Left colon (tissue), 2 donors: ENCODE measurements at regions of chr22 and their contacts with region 1.

Region 1: DNA sequence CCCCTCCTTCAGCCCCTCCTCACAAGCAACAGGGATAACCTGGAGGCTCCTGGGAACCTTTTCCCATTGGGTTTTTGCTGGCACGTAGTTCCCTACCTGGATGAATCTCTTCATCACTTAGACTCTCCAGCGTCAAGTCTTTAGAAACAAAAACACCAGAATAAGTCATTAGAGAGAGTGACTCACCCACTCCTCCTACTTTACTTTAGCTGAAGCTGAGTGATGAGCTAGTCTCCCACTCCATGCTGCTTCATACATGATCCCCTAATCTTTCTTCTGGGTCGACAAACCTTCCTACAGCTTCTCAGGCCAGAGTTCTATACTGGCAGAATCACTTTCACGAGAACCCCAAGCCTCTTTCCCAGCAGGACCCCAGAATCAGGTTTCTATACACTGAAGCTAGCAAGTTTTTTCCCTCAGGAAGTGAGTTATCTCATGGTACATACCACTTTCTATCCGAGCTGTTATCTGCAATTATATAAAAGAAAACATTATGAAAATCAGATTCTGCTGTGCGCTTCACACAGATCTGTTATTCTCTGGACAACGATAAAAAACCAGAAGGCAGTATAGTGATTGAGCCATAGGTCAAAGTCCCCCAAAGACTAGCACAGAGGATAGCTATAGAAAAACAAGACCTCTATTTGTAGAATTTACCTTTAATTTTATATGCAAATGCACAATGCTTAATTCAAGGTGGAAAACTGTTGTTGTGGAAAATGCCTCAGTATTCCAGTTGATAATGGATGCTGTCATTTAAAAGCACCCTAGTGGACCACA is 18.7 kb downstream of the DRICH1 start:
- DNase-seq: no peak
- ATAC-seq: peak; percentile 66

Region 2: DNA sequence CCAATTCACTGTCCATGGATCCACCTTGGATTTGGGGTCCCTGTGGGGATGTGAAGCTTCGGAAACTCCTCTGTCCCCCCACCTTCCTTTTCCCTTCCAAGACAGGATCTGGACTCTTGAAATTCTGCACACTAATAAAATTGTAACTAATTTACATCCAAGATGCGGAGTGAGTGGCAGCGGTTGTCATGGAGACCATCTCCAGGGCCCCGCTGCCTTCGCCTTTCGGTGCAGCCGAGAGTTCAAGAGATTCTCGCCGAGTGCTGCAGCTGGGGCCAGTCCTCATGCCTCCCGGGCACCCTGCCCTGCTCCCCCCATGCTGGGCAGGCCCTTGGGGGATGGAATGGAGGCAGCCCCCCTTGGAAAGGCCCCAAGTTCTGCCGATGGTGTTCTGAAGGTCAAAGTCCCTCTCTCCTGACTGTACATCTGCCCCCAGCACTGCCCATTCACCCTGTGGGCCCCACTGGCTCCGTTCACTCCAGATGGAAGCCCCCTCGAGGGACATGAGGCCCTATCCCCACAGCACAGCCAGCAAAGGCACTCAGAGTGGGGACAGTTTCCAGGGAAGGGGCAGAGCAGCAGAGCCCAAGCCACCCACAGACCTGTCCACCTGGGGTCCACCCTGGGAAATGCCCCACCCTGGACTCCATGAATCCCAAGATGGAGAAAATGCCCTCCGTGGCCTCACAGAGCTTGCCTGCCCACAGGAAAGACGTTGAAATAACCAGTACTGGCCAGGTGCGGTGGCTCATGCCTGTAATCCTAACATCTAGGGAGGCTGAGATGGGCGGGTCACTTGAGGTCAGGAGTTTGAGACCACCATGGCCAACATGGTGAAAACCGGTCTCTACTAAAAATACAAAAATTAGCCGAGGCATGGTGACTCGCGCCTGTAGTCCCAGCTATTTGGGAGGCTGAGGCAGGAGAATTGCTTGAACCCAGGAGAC is 59.2 kb before region 1 on chr22:
- intact Hi-C with region 1: loop called in 1 of 2 experiments (anchors 10 kb)
- DNase-seq: no peak
- ATAC-seq: no peak